Right lobe of liver (tissue), 6 donors: ENCODE measurements at regions of chr1 and their contacts with region 1.

Region 1: DNA sequence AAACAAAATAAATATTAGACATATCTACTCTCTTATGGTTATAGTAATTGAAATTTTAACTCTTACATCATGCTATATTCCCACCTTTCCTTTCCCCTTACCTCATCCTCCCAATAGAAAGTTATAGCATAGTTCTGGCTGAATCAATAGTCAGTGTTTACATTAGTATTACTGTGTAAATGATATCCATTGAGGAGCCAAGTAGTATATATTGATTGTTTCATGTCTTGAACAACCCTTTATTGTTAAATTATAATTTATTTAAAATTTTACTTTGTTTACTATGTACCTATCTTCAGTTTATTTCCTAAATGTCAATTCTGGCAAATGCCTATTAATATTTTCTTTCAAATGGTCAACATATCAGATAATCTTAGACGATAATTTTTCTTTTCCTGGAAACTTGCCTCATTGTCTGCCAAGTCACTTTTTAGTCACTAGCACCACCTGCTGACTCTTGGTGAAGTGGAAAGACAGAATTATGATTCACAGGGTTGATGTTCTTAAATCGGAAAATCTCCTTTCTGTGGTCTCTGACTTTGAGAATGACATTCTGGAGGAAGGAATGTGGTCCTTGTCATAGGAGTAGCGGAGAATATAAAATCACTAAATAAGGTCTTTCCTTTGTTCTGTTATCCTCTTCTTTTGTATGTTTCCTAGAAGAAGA is 8.7 kb downstream of the HJV start:
- DNase-seq: no peak
- ATAC-seq: peak; percentile 70 to 76 (median 72)
- H3K4me3 ChIP-seq: no peak overlapping the region
- H3K27ac ChIP-seq: no peak overlapping the region
- H3K4me1 ChIP-seq: peaks cover 0 to 7% (median 0%) of the 10 kb centered on the region in 4 donors
- H3K27me3 ChIP-seq: no peaks in the 10 kb centered on the region
- CTCF ChIP-seq: peak; percentile 73 to 85 (median 81)
- POLR2A ChIP-seq: no peak

Region 2: GRCh38 chr1:145690624-145691035 is 322.2 kb before region 1 on chr1:
- intact Hi-C with region 1: no loop called
- DNase-seq: no peak
- ATAC-seq: peak; percentile 72 to 77 (median 76)
- H3K4me3 ChIP-seq: no peak overlapping the region
- H3K27ac ChIP-seq: peak overlapping the region in 2 of 3 donors; percentile 58 to 76
- H3K4me1 ChIP-seq: peaks cover 0 to 31% (median 13%) of the 10 kb centered on the region in 4 donors
- H3K27me3 ChIP-seq: no peaks in the 10 kb centered on the region
- CTCF ChIP-seq: no peak
- POLR2A ChIP-seq: no peak

Region 3: DNA sequence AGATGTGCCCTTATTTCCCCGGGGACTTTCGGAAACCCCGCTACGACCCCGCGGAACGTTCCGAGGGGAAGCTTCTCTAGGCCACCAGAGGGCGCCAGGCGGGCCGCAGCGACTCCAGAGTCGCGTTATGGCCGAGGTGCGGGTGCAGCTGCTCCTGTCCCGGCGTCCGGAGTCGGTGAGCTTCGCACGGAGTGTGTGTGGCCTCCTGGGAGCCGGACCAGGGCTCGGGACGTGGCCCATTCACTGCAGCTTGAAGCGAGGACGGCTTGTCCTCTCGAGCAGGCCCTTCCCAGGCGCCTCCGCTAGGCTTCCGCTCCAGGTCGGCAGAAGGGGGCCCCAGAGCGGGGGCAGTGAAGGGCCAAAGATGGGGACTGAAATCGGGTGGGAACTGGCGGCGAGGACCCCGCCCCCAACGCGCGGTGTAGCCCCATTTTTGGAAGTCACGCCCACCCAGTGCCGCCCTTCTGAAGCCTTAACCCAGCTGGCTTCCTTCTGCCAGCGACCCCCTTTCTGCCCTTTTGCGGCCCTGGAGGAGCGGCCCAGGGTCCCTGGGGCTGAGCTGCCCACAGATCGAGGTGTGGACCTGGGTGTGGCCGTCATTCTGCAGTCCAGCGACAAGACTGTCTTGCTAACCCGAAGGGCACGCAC is 167.2 kb before region 1 on chr1 and contains the start of gene NUDT17:
- intact Hi-C with region 1: loop called (anchors 5 to 10 kb)
- DNase-seq: peak; percentile 83 to 86 (median 85)
- ATAC-seq: peak; percentile 91 to 94 (median 93)
- H3K4me3 ChIP-seq: peak within 1 kb of the TSS; percentile 36 to 58 (median 54)
- H3K27ac ChIP-seq: peak within 1 kb of the TSS in 2 of 3 donors; percentile 37 to 41
- H3K4me1 ChIP-seq: peaks cover 0 to 14% (median 2%) of the 10 kb centered on the region in 4 donors
- H3K27me3 ChIP-seq: no peaks in the 10 kb centered on the region
- CTCF ChIP-seq: peak; percentile 79 to 95 (median 94)
- POLR2A ChIP-seq: peak; percentile 20
- total RNA-seq, gene NUDT17: 0.51 to 2.2 (median 1.0) TPM

Region 4: DNA sequence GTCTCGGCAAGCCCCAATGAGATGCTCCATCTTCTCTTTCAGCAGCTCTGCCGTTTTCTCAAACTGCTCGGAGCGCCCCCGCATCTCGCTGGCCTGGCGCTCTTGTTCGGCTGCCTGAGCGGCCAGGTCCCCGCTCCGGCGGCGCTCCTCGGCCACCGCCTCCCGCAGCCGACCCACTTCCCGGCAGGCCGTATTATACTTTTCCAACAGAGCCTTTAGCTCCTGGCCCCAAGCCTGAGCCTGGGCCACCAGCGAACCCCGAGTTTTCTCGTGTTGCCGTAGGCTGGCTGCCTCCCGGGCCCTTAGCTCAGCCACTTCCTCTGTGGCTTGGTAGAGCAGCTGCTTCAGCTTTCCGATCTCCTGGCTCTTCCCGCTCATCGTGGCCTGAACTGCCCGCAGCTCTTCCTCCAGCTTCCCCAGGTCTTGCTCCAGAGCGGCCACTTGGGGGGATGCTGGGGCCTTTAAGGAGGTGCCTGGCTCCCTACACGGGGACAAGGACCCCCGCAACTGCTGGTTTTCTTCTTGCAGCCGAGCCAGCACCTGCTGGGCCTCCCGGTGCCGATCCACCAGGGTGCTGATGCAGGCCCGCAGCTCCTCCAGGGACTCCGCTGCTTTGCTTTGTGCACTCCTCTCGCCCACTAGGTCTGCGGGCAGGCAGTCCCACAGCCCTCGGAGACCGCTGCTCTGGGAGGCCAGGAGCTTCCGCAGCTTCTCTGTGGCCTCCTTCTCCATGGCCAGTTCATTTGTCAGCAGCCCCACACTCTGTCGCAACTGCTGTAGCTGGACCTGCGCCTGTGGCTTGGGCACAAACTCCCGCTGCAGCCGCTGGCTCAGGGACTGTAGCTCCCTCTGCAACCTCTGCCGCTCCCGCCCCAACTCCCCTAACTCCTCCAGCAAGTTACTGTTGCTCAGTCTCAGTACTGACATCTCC is 140.6 kb before region 1 on chr1:
- intact Hi-C with region 1: no loop called
- DNase-seq: peak; percentile 74 to 86 (median 85)
- ATAC-seq: peak; percentile 91 to 93 (median 92)
- H3K4me3 ChIP-seq: peak overlapping the region; percentile 43 to 68 (median 55)
- H3K27ac ChIP-seq: peak overlapping the region in 2 of 3 donors; percentile 49 to 52
- H3K4me1 ChIP-seq: peaks cover 0 to 16% (median 3%) of the 10 kb centered on the region in 4 donors
- H3K27me3 ChIP-seq: no peaks in the 10 kb centered on the region
- CTCF ChIP-seq: no peak
- POLR2A ChIP-seq: peak; percentile 44

Region 5: GRCh38 chr1:145978854-145979759 is 33.8 kb before region 1 on chr1:
- intact Hi-C with region 1: loop called in 1 of 2 experiments (anchors 5 kb)
- DNase-seq: peak; percentile 71 to 80 (median 77)
- ATAC-seq: peak; percentile 71 to 78 (median 74)
- H3K4me3 ChIP-seq: peak overlapping the region in 1 of 3 donors; percentile 5
- H3K27ac ChIP-seq: peak overlapping the region; percentile 77 to 91 (median 86)
- H3K4me1 ChIP-seq: peaks cover 0 to 45% (median 11%) of the 10 kb centered on the region in 4 donors
- H3K27me3 ChIP-seq: no peaks in the 10 kb centered on the region
- CTCF ChIP-seq: peak in 1 of 4 donors; percentile 11
- POLR2A ChIP-seq: peak; percentile 67